ENCODE measurements at regions of chr3 and their contacts with region 1.

Region 1: DNA sequence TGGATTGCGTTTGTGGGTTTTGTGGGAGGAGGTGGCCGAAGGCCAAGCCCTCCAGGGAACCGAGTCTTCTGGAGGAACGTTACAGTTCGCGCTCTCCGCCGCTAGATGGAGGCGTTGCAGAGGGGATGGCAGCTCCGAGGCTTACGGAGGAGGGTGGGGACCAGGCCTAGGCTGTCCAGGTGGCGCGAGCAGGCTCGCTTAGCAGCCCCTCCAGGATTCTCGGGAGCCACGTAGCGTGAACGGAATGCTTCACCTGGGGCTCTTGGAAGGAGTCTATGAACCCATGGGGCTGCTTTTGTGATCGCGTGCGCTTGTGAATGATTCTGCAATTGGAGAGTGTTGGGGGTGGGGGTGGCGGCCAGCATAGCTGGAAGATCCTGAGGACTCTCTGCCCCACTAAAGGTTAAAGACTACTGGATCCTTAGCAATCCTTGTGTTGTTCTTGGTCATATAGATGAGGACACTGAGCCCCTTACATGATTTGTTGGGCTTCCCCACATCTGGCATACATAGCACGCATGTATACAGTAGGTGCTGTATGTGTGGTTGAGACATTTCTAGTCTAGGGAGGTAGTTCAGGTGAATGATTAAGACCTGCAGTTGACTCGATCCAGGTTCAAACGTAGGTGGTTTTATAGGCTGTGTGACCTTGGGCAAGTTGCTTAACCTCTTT is 25.7 kb downstream of the FAM3D start:
- DNase-seq: peak; percentile 61
- H3K4me3 ChIP-seq: no peak overlapping the region
- H3K27ac ChIP-seq: no peak overlapping the region
- H3K4me1 ChIP-seq: no peaks in the 10 kb centered on the region
- CTCF ChIP-seq: peak; percentile 86

Region 2: GRCh38 chr3:58532794-58533220 is 108.0 kb before region 1 on chr3:
- CTCF ChIA-PET with region 1: no interaction called
- POLR2A ChIA-PET with region 1: no interaction called
- intact Hi-C with region 1: no loop called
- DNase-seq: peak; percentile 89
- H3K4me3 ChIP-seq: no peak overlapping the region
- H3K27ac ChIP-seq: no peak overlapping the region
- H3K4me1 ChIP-seq: peaks cover 9% of the 10 kb centered on the region
- CTCF ChIP-seq: peak; percentile 94

Region 3: GRCh38 chr3:58562498-58562897 is 78.3 kb before region 1 on chr3:
- CTCF ChIA-PET with region 1: no interaction called
- POLR2A ChIA-PET with region 1: no interaction called
- intact Hi-C with region 1: no loop called
- DNase-seq: no peak
- H3K4me3 ChIP-seq: no peak overlapping the region
- H3K27ac ChIP-seq: no peak overlapping the region
- H3K4me1 ChIP-seq: peaks cover 8% of the 10 kb centered on the region
- CTCF ChIP-seq: no peak

Region 4: GRCh38 chr3:59049671-59050331 is 409.0 kb after region 1 on chr3 and contains the start of gene CFAP20DC:
- CTCF ChIA-PET with region 1: no interaction called
- POLR2A ChIA-PET with region 1: interaction called, 4 read pairs
- intact Hi-C with region 1: loop called (anchors 5 kb)
- DNase-seq: peak; percentile 76
- H3K4me3 ChIP-seq: peak within 1 kb of the TSS; percentile 60
- H3K27ac ChIP-seq: no peak within 1 kb of the TSS
- H3K4me1 ChIP-seq: no peaks in the 10 kb centered on the region
- CTCF ChIP-seq: no peak
- total RNA-seq, gene CFAP20DC: 0.46 and 1.0 TPM in 2 replicates